Caco-2 (cell line): ENCODE measurements at regions of chr4 and their contacts with region 1.

Region 1: DNA sequence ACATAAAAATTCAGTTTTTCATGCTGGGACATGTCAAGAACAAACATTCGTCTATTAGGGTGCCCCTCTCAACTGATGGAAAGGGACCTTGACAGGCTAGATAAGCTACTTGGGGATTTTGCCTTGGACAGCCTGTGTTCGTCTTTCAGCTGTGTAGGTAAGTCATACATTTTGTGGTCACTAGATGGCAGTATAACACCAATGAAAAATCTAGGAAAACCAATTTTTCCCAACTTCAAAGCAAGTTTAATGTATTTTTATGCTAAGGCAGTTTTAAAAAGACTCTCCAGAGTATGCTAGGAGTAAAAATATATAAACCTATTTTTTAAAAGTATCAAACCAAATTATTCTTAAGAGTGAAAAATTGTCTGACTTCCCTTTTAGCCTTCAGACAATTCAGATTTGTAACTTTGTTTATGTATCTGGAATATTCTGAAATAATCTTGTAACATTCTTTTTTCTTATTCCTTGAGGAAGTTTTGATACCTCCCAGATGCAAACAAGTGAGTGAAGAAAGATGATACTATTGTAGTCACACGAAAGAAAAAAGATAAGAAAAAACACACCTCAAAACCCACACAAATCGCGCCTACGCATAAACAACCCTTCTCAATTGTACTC is 158.3 kb downstream of the CPE start:
- DNase-seq: peak in 1 of 2 experiments; percentile 40
- H3K4me3 ChIP-seq: no peak overlapping the region
- H3K4me3 Mint-ChIP-seq: no peak overlapping the region
- H3K27ac Mint-ChIP-seq: no peak overlapping the region
- H3K4me1 ChIP-seq: no peaks in the 10 kb centered on the region
- H3K4me1 Mint-ChIP-seq: no peaks in the 10 kb centered on the region
- H3K27me3 ChIP-seq: no peaks in the 10 kb centered on the region
- H3K27me3 Mint-ChIP-seq: no peaks in the 10 kb centered on the region
- CTCF ChIP-seq: peak; percentile 39 to 52

Region 2: DNA sequence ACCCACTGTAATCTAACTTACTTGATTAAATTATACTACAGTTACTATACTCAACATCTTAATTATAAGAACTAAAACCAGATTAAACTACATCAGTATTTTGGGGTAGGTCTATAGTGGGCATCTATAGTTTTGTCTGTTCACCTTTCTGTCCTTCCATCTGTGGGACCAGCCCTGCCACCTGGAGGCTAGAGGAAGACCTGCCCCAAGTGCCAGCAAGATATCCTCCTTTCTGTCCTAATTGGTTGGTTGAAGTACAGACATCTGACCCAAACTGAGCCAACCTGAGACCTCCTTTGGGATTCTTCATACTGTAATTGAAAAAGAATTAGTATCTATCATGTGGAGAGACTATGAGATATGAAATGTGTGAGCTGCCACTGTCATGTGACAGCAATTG is 163.7 kb after region 1 on chr4:
- CTCF ChIA-PET with region 1: interaction called, 3 read pairs
- POLR2A ChIA-PET with region 1: no interaction called
- intact Hi-C with region 1: loop called (anchors 1 kb)
- DNase-seq: peak in 1 of 2 experiments; percentile 28
- H3K4me3 ChIP-seq: no peak overlapping the region
- H3K4me3 Mint-ChIP-seq: no peak overlapping the region
- H3K27ac Mint-ChIP-seq: no peak overlapping the region
- H3K4me1 ChIP-seq: no peaks in the 10 kb centered on the region
- H3K4me1 Mint-ChIP-seq: no peaks in the 10 kb centered on the region
- H3K27me3 ChIP-seq: no peaks in the 10 kb centered on the region
- H3K27me3 Mint-ChIP-seq: no peaks in the 10 kb centered on the region
- CTCF ChIP-seq: peak; percentile 45 to 51

Region 3: GRCh38 chr4:165864271-165864670 is 327.1 kb after region 1 on chr4:
- CTCF ChIA-PET with region 1: no interaction called
- POLR2A ChIA-PET with region 1: no interaction called
- intact Hi-C with region 1: loop called (anchors 5 kb)
- DNase-seq: peak in 1 of 2 experiments; percentile 25
- H3K4me3 ChIP-seq: no peak overlapping the region
- H3K4me3 Mint-ChIP-seq: no peak overlapping the region
- H3K27ac Mint-ChIP-seq: no peak overlapping the region
- H3K4me1 ChIP-seq: no peaks in the 10 kb centered on the region
- H3K4me1 Mint-ChIP-seq: peaks cover 7% of the 10 kb centered on the region
- H3K27me3 ChIP-seq: no peaks in the 10 kb centered on the region
- H3K27me3 Mint-ChIP-seq: no peaks in the 10 kb centered on the region
- CTCF ChIP-seq: peak in 1 of 2 experiments; percentile 35

Region 4: GRCh38 chr4:166252487-166253402 is 715.6 kb after region 1 on chr4:
- CTCF ChIA-PET with region 1: no interaction called
- POLR2A ChIA-PET with region 1: no interaction called
- intact Hi-C with region 1: loop called (anchors 1 kb)
- DNase-seq: peak; percentile 30 to 32
- H3K4me3 ChIP-seq: no peak overlapping the region
- H3K4me3 Mint-ChIP-seq: no peak overlapping the region
- H3K27ac Mint-ChIP-seq: no peak overlapping the region
- H3K4me1 ChIP-seq: no peaks in the 10 kb centered on the region
- H3K4me1 Mint-ChIP-seq: no peaks in the 10 kb centered on the region
- H3K27me3 ChIP-seq: no peaks in the 10 kb centered on the region
- H3K27me3 Mint-ChIP-seq: no peaks in the 10 kb centered on the region
- CTCF ChIP-seq: peak; percentile 54 to 69